ENCODE measurements at regions of chr14 and their contacts with region 1.

Region 1: GRCh38 chr14:89848165-89848564 is 106.4 kb downstream of the EFCAB11 start:
- DNase-seq: no peak
- ATAC-seq: no peak
- H3K4me3 ChIP-seq: no peak overlapping the region
- H3K27ac ChIP-seq: no peak overlapping the region
- H3K4me1 ChIP-seq: no peaks in the 10 kb centered on the region
- H3K27me3 ChIP-seq: no peaks in the 10 kb centered on the region

Region 2: DNA sequence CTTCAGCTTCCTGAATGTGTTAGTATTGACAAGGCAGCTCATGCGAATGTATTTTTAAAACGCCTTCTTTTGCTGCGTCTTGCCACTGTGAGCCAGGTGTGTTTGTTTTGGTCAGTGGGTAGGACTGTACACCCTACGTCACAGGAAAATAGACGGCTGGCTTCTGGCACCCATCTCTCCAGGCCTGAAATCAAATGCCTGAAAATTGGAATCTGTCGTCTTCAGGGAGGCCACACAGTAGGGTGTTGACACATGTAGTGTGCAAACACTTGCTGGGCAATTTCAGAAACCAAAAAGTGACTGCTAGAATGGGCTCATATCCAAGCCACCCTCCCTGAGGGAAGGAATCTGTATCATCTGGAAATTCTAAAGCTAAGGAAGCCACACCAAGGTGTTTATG is 814.4 kb before region 1 on chr14:
- intact Hi-C with region 1: loop called in 1 of 2 experiments (anchors 5 kb)
- DNase-seq: no peak
- ATAC-seq: no peak
- H3K4me3 ChIP-seq: no peak overlapping the region
- H3K27ac ChIP-seq: no peak overlapping the region
- H3K4me1 ChIP-seq: no peaks in the 10 kb centered on the region
- H3K27me3 ChIP-seq: no peaks in the 10 kb centered on the region

Region 3: GRCh38 chr14:89425931-89426330 is 422.2 kb before region 1 on chr14:
- intact Hi-C with region 1: loop called in 1 of 2 experiments (anchors 10 kb)
- DNase-seq: no peak
- ATAC-seq: no peak
- H3K4me3 ChIP-seq: no peak overlapping the region
- H3K27ac ChIP-seq: peak overlapping the region in 1 of 2 donors; percentile 60
- H3K4me1 ChIP-seq: no peaks in the 10 kb centered on the region
- H3K27me3 ChIP-seq: no peaks in the 10 kb centered on the region

Region 4: DNA sequence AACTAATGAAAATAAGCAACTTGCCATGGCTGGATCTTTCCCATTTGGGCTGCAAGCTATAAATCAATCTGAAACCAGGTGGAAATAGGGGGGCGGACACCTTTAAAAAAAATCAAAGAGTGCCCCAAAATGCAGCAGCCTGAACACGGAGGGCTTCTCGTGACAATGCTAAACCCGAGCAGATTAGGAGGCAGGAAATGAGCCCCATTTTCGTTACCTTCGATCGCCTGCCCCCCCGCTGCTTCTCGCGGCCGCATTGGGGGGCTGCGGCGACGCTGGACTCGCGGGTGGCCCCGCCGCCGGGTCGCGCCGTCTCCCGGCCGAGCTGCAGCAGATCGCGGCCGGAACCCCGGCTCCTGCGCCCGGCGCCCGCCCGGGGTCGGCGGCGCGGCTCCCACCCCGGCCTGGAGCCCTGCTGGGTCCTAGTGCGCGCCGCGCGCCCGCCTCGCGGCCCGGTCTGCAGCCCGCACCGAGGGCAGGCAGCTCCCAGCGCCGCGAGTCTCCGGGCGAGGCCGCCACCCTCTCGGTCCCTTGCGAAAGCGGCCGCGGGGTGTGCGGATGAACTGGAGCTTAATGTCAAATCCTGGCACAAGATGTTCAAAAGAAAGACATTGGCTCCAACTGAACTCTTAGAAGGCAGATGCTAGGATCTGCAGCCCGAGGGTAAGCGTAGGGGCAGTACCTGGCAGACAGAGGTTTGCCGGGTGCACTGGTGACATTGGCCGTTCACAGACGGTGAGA is 229.2 kb before region 1 on chr14:
- intact Hi-C with region 1: no loop called
- DNase-seq: peak; percentile 85 to 91
- ATAC-seq: peak; percentile 85
- H3K4me3 ChIP-seq: peak overlapping the region; percentile 86 to 90
- H3K27ac ChIP-seq: peak overlapping the region in 1 of 2 donors; percentile 37
- H3K4me1 ChIP-seq: peaks cover 0 to 8% of the 10 kb centered on the region in 2 donors
- H3K27me3 ChIP-seq: no peaks in the 10 kb centered on the region

Measured in aorta (tissue), 5 donors.